Activated CD8-positive, alpha-beta memory T cell treated with anti-CD3 and anti-CD28 coated beads, Interleukin-2, amount 10 ng/mL, durations not matched to agents 7 days and 5 days (primary cell): ENCODE measurements at regions of chr1 and their contacts with region 1.

Region 1: DNA sequence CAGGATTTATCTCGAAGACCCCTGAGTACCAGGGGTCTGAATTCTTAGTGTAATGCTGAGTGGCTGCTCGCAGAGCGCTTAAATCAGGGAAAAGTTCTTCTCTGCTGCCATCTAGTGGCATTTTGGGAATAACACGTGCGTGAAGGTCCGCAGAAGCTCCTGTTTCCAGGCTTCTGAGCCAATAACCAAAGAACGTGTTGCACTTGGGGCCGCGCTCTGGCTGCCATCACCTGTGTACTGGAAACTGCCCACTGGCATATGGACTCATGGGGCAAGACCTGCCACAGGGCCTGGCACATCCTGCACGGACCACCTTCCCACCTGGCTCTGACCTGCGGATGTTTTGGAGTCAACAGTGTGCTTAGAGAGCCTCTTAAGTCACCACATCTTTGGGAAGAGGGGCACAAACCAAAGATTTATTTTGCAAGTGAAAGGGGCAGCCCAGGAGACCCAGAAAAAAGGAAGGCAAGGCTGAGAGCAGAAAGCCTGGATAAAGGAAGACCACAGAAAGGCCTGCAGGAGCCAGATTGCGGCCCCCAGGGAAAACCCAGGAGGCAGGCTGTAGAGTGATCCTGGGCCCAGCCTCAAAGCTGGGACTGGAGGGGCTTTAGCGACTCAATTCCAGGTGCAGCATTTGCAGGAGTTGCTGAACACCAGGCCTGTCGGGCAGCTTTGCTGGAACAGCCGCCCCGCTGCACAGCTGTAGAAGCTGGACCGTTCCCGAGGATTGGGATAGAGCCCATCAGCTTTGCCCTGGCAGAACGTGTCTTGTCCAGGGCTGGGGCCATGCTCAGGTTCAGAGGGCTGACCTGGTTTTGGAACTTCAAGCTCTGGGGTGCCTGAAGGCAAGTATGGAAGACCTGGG is 13.0 kb downstream of the CHIT1 start:
- DNase-seq: peak; percentile 66
- ATAC-seq: peak; percentile 70
- H3K4me3 Mint-ChIP-seq: no peak overlapping the region
- H3K27ac Mint-ChIP-seq: no peak overlapping the region
- H3K4me1 Mint-ChIP-seq: no peaks in the 10 kb centered on the region
- H3K27me3 Mint-ChIP-seq: peaks cover 20% of the 10 kb centered on the region

Region 2: DNA sequence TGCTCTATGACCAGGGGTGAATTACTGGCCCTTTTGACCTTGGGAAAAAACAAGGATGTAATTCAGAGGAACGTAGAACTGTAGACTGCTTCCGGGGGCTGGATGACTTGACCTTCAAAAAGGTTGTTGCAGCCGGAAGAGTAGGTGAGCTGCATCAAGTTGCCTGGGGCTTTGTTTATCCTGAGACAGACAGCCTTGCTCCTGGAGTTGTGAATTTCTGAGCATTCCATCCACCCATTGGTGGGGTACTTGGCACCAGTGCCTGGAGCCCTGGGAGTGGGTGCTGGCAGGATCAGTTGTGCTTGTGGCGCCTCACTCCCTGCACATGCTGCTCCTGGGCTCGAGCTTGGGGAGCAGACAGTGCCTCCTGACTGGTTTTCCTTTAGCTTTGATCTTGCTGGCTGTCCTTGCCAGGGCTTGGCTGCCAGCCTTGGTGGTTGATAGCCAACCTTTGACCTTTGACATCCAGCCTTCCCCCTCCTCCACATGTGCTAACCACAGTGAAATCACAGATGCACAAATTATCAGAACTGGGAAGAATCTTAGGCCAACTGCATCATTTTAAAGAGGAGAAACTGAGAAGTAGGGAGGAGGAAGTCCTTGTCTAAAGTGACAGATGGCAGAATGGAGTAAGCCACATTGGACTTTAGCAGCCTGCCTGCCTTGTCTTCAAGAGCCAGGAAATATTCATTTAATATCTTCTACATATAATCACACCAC is 114.4 kb before region 1 on chr1:
- CTCF ChIA-PET with region 1: no interaction called
- DNase-seq: peak; percentile 9
- ATAC-seq: no peak
- H3K4me3 Mint-ChIP-seq: no peak overlapping the region
- H3K27ac Mint-ChIP-seq: no peak overlapping the region
- H3K4me1 Mint-ChIP-seq: no peaks in the 10 kb centered on the region
- H3K27me3 Mint-ChIP-seq: peaks cover 18% of the 10 kb centered on the region

Region 3: DNA sequence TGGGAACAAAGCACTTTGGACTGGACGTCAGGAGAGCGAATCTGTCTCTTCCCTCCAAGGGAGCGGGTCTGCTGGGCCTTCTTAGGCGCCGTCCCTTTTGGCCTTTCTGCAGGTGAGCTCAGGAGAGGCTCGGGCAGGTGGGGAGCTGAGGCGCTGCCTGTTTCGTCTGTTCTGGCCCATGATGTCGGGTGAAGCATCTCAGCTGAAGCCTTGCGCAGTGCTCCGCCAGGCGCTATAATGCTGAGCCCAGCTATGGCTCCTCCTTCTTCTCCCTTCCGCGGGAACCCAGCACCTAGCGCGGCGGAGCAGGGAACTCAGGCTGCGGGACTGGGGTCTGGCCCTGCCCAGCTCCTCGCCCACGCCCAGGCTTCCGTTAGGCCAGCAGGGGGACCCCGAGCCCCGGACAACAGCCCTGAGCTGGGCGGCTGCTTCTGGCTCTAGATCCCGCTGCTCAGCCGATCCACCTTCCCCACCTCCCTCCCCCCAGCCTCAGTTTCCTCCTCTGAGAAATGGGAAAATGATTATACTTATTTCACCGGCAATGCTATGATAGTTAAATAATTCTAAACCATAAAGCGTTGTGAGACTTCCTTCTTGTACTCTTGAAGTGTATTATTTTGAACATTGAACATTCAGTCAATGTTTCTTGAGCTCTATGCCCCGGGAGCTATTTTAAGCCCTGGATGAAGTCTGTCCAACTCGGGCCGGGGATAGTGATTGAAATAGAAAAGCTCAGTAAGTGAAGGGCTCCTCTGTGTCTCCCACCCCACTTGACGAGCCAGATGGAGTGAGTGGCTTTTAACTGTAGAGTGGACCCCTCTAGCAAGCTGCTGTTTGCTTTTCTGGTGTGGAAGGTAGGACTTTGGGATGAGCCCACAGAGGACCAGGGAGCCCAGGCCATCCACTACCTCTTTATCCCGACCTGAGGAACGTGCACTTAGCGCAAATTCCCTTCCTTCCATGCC is 98.6 kb before region 1 on chr1:
- CTCF ChIA-PET with region 1: interaction called, 36 read pairs
- DNase-seq: peak; percentile 52
- ATAC-seq: peak; percentile 69
- H3K4me3 Mint-ChIP-seq: no peak overlapping the region
- H3K27ac Mint-ChIP-seq: no peak overlapping the region
- H3K4me1 Mint-ChIP-seq: peaks cover 14% of the 10 kb centered on the region
- H3K27me3 Mint-ChIP-seq: peaks cover 51% of the 10 kb centered on the region

Region 4: DNA sequence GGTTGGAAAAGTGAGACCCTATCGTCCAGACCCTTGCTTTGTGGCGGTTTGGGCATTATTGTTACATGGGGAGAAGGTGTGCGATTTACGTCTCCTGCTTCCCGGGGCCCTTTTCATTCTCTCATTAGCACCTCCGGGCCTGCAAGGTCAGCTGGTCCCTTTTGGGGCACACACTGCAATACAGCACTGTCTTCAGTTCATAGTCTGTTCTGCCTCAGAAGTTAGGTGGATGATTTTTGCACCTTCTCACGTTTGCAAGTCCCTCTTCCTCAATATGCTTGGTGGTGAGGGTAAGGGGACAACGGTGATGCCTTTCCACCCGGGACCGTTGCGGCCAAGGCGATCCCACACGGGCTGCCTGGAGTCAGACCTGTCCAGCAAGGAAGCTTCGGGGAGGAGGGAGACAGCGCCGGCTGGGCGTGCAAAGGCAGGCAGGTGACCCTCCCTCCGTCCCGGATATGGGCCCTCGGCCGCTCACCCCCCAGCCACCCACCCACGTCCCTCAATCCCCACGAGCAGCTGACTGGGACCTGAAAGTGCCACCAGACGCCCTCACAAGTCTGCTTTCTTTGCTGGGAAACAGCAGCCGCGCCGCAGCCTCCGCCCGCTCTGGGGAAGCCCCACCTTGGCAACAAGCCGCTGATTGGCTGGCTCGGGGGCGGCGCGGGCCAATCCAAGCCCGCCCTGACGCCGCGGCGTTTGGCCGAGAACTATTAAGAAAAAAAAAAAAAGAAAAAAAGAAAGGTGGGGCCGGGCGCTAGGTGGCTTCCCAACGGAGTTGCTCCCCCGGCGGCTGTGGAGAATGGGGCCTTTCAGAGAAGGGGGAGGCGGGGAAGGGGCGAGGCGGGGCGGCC is 110.6 kb after region 1 on chr1:
- CTCF ChIA-PET with region 1: no interaction called
- DNase-seq: peak; percentile 96
- ATAC-seq: peak; percentile 91
- H3K4me3 Mint-ChIP-seq: peak overlapping the region; percentile 71
- H3K27ac Mint-ChIP-seq: peak overlapping the region; percentile 91
- H3K4me1 Mint-ChIP-seq: peaks cover 66% of the 10 kb centered on the region
- H3K27me3 Mint-ChIP-seq: no peaks in the 10 kb centered on the region

Region 5: DNA sequence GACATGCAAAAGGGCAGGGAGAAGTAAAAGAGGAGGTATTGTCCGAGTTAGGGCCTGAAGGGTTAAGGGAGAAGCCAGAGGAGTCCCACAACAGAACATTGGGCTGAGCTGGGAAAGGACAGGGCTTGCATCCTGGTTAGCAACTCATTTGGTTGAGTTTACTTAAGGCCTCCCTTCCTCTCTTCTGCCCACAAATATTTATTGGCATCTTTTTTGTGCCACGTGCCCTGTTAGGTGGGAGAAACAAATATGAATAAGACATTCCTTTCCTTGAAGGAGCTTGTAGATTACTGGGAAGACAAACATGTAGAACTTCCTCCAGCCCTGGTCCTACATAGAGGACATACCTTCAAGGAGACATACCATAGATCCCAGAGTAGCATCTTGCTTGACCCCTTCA is 206.2 kb after region 1 on chr1:
- CTCF ChIA-PET with region 1: no interaction called
- DNase-seq: no peak
- ATAC-seq: no peak
- H3K4me3 Mint-ChIP-seq: no peak overlapping the region
- H3K27ac Mint-ChIP-seq: no peak overlapping the region
- H3K4me1 Mint-ChIP-seq: no peaks in the 10 kb centered on the region
- H3K27me3 Mint-ChIP-seq: peaks cover 42% of the 10 kb centered on the region